ENCODE measurements at regions of chr2 and their contacts with region 1.

Region 1: DNA sequence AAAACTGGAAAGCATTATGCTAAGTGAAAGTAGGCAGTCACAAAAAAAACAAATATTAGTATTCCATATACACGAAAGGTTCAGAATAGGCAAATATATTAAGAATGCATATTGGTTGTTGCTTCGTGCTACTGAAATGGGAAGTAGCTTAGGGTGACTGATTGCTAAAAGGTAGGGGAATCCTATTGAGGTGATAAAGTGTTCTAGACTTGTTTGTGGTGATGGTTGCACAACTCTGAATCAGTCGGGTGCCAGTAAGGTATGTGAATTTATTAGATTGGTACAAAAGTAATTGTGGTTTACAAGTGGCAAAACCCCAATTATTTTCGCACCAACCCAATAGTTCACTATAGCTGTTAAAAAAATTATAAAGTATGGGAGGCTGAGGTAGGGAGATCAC is 20.7 kb downstream of the USP34 start:
- DNase-seq: no peak
- ATAC-seq: peak; percentile 76
- H3K4me3 Mint-ChIP-seq: no peak overlapping the region
- H3K27ac Mint-ChIP-seq: peak overlapping the region; percentile 9
- H3K4me1 Mint-ChIP-seq: peaks cover 56% of the 10 kb centered on the region
- H3K27me3 Mint-ChIP-seq: no peaks in the 10 kb centered on the region
- CTCF ChIP-seq: no peak

Region 2: DNA sequence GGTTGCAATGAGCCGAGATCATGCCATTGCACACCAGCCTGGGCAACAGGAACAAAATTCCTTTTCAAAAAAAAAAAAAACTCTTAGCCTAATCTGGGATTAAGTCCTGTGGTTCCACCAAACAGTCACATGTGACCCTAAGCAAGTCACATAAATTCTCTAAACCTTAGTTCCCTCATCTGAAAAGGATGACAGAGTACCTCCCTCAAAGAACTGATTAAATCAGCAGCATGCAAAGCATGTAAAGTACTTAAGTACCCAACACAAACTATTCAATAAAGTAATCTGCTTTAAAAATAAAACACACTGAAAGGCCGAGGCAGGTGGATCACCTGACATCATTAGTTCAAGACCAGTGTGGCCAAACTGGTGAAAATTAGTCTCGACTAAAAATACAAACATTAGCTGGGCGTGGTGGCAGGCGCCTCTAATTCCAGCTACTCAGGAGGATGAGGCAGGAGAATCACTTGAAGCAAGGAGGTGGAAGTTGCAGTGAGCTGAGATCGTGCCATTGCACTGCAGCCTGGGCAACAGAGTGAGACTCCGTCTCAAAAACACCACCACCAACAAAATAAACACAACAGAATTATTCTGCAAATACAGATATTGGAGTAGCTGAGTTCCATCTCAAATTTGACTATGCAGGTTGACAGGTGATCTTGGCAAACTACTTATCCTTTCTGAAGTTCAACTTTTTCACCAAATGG is 13.8 kb after region 1 on chr2:
- CTCF ChIA-PET with region 1: no interaction called
- POLR2A ChIA-PET with region 1: interaction called, 12 read pairs
- intact Hi-C with region 1: no loop called
- DNase-seq: no peak
- ATAC-seq: peak; percentile 29
- H3K4me3 Mint-ChIP-seq: peak overlapping the region; percentile 66
- H3K27ac Mint-ChIP-seq: peak overlapping the region; percentile 81
- H3K4me1 Mint-ChIP-seq: peaks cover 66% of the 10 kb centered on the region
- H3K27me3 Mint-ChIP-seq: no peaks in the 10 kb centered on the region
- CTCF ChIP-seq: no peak

Region 3: GRCh38 chr2:61566566-61566965 is 116.4 kb after region 1 on chr2:
- CTCF ChIA-PET with region 1: no interaction called
- POLR2A ChIA-PET with region 1: no interaction called
- intact Hi-C with region 1: no loop called
- DNase-seq: no peak
- ATAC-seq: no peak
- H3K4me3 Mint-ChIP-seq: no peak overlapping the region
- H3K27ac Mint-ChIP-seq: no peak overlapping the region
- H3K4me1 Mint-ChIP-seq: no peaks in the 10 kb centered on the region
- H3K27me3 Mint-ChIP-seq: no peaks in the 10 kb centered on the region
- CTCF ChIP-seq: no peak

Region 4: GRCh38 chr2:62556086-62556485 is 1105.9 kb after region 1 on chr2:
- CTCF ChIA-PET with region 1: no interaction called
- POLR2A ChIA-PET with region 1: no interaction called
- intact Hi-C with region 1: no loop called
- DNase-seq: no peak
- ATAC-seq: no peak
- H3K4me3 Mint-ChIP-seq: no peak overlapping the region
- H3K27ac Mint-ChIP-seq: no peak overlapping the region
- H3K4me1 Mint-ChIP-seq: no peaks in the 10 kb centered on the region
- H3K27me3 Mint-ChIP-seq: peaks cover 5% of the 10 kb centered on the region
- CTCF ChIP-seq: no peak